ENCODE measurements at regions of chr12 and their contacts with region 1.

Region 1: DNA sequence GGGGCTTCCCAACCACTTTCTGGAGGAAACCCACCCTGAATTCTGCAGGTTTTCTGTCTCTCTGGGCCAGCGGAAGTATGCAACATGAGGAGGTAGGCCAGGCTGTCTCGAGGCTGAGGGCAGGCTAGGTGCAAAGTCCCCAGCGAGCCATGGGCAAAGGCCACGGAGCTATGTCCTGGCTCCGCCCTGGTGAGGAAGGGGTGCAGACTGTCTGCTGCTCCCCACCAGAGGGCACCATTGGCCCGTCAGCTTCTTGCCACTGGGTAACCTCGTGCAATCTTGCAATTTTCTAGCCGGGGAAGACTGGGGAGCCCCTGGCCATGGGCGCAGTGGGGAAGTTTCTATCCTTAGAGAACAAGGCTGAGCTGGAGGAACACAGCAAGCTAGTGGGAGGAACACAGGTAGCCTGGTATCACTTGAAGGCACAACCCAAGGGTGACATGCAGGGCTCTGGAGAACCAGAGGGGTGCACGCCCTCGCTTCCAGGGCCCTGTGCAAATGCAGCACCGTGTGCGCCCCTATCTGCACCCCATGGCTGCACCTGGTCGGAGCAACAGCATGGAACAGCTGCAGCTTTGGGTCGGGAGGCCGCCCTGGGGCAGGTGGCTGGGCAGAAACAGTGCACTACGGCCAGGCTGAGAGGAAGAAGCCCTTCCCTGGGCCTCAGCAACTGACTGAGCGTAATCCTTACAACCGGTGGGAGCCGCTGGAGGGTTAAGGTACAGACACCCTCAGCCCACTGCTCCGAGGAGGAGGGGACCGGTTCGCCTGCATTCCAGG is 27.6 kb upstream of the RPLP0 start:
- DNase-seq: peak; percentile 95
- ATAC-seq: peak; percentile 83

Region 2: DNA sequence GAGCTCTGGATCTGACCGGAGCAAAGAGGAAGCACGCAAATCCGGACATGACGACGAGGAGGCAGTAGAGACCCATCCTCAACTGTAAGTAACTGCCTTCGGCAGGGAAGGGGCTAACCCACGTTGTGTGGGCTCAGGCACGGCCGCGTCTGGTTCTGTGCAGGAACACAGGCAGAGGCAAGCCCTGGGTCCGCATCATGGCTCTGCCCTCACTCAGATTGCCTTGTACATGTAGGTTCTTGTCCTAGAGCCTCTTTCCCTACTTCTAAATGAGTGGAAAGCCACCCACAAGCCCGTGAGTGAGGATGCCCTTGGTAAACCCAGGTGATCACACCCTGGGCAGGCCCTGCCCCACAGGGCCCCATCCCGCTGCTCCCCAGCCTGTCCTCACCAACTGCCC is 18.6 kb before region 1 on chr12:
- intact Hi-C with region 1: no loop called
- DNase-seq: no peak
- ATAC-seq: no peak

Region 3: GRCh38 chr12:120265473-120266179 is 37.1 kb after region 1 on chr12 and contains the start of gene PXN:
- intact Hi-C with region 1: loop called (anchors 5 kb)
- DNase-seq: peak; percentile 93
- ATAC-seq: peak; percentile 75
- total RNA-seq, gene PXN: 183 TPM

Measured in sciatic nerve (tissue), 2 donors.